ENCODE measurements at regions of chr11 and their contacts with region 1.

Region 1: DNA sequence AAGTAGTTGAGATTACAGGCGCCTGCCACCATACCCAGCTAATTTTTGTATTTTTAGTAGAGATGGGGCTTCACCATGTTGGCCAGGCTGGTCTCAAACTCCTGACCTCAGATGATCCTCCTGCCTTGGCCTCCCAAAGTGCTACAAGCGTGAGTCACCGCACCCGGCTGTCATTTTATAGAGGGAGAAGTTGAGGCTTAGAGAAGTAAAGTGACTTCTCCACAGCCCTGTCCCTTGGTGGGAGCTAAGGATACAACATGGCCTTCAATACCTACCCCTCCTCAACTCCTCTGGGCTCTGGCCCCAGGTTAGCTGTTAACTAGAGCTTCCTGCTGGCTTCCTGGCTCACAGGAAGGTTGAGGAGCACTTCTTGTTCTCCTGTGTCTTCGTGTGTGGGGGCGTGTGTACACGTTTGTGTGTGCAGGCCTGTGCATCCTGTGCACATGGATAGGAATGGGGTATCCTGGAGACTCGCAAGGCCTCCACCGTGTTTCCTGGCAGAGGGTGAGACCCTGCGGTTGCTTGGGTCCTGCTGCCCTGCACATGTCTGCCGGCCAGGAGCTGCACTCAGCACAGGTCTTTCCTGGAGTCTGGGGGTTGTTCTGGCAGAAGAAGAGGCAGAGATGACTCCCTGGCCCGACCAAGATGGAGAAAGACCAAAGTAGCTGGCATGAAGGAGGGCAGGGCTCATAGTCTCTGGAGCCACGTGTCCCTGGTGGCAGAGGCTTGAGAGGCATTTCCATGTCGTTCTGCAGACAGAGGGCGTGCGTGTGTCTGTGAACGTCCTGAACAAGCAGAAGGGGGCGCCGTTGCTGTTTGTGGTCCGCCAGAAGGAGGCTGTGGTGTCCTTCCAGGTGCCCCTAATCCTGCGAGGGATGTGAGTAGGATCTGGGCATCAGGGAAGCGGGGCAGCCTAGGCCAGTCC is 2.4 kb downstream of the SIDT2 start:
- DNase-seq: peak; percentile 93

Region 2: DNA sequence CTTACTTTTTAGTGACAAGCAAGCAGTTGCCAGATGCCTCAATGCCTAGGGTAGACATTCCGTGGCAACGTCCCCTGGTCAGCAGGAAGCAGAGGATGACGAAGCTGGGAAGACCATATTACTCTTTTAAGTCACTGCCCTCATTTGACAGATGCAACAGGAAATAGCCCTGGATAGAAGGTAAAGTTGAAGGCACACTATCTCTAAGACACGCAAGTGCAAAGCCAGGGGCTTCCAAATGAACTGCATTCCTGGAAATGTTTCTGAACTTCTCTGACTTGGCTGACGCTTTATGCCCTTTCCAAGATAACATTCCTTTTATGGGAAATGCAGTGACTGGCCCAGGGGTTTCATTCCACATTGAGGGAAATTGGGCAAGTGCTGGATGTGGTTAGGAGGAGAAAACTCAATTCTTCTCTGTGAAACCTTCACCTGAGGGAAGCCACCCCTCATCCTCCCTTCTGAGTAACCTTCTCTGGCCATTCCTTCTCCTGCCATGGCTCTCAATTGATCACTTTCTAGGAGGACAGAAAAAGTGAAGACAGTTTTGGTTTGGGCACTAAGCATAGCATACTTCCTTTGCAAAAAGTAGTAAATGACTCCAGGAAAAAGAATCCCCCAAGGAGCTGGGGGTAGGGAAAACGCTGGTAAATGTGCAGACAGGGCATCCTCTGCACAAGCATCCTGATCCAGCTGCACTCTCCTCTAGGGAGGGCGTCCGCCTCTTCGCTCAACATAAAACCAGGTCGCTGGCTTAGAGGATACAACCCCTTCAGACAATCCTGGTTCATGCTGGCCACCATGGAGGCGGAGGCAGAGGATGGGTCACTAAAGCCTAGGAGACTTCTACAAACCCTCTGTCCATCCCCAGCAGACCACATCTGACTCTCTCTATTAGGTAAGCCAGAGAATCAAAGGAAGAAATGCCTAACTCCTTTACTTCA is 36.5 kb after region 1 on chr11:
- intact Hi-C with region 1: loop called in 1 of 2 experiments (anchors 2 kb)
- DNase-seq: peak; percentile 78

Region 3: GRCh38 chr11:117226388-117227385 is 45.8 kb after region 1 on chr11:
- intact Hi-C with region 1: loop called in 1 of 2 experiments (anchors 5 kb)
- DNase-seq: peak; percentile 81

Measured in posterior vena cava (tissue), 2 donors.